ENCODE measurements at regions of chr3 and their contacts with region 1.

Region 1: GRCh38 chr3:146189519-146190173 is 28.7 kb upstream of the PLOD2 start:
- DNase-seq: peak; percentile 90
- ATAC-seq: peak; percentile 79
- H3K4me3 ChIP-seq: peak overlapping the region; percentile 36; the same call in 1 of the 2 replicates
- H3K27ac ChIP-seq: no peak overlapping the region
- H3K4me1 ChIP-seq: peaks cover 20% of the 10 kb centered on the region
- H3K27me3 ChIP-seq: no peaks in the 10 kb centered on the region
- CTCF ChIP-seq: peak; percentile 90

Region 2: DNA sequence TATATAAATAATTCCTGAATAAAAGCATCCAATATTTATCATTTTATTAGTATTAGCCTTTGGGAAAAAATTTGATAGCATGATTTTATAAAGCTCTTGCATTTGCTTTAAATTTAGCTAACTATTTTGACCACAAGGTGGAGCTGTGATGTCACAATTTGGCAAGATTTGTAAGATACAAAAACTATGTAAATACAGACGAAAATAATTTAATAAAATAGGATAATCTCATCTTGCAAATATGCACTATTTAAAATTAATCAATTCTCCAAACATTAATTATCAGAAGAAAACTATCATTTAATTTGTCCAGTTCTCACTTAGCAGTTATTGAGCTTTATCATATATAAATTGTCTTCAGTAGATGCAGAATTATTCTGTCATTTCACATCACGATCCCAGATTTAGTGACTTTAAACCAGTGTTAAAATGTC is 124.1 kb before region 1 on chr3:
- CTCF ChIA-PET with region 1: interaction called, 19 read pairs
- POLR2A ChIA-PET with region 1: no interaction called
- intact Hi-C with region 1: loop called (anchors 1 kb)
- DNase-seq: peak; percentile 82
- ATAC-seq: no peak
- H3K4me3 ChIP-seq: no peak overlapping the region
- H3K27ac ChIP-seq: peak overlapping the region; percentile 63; the same call in 1 of the 2 replicates
- H3K4me1 ChIP-seq: peaks cover 32% of the 10 kb centered on the region
- H3K27me3 ChIP-seq: no peaks in the 10 kb centered on the region
- CTCF ChIP-seq: peak; percentile 73

Region 3: DNA sequence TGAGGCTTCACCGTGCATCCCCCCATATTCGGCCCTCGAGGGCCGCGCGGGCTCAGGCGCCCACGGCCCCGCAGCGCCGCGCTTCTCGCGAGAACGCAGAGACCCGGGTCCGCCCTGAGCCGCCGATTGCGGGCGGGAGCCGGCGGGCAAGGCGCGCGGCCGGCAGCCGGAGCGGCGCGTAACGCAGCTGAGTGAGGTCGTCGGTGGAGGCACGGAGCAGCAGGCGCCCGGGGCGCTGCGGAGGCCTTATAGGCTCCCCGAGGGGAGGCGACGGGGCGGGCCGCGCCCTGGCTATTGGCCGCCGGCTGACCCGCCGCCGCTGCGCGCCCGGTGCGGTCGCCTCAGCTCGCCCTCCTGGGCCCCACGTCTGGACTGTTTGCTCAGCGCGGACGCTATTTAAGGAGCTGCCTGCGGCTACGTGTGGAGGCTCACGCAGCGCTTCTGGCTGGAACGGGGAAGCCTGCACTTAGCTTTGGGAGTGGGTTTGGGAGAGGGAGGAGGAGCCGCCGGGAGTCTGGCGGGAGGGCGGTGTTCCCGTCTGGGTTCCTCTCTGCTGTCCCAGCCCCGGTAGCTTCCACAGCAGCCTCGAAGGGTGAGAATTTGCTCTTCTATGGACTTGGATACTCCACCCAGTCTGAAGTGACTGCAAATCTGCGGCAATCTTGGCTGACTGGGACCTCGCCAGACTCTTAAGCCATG is 28.5 kb before region 1 on chr3 and contains the start of gene PLOD2:
- CTCF ChIA-PET with region 1: interaction called, 6 read pairs
- POLR2A ChIA-PET with region 1: interaction called, 4 read pairs
- intact Hi-C with region 1: loop called (anchors 1 kb)
- DNase-seq: peak; percentile 97
- ATAC-seq: peak; percentile 57
- H3K4me3 ChIP-seq: peak within 1 kb of the TSS; percentile 79
- H3K27ac ChIP-seq: peak within 1 kb of the TSS; percentile 89
- H3K4me1 ChIP-seq: peaks cover 70% of the 10 kb centered on the region
- H3K27me3 ChIP-seq: no peaks in the 10 kb centered on the region
- CTCF ChIP-seq: no peak
- total RNA-seq, gene PLOD2: 76.1 and 84.8 TPM in 2 replicates

Region 4: DNA sequence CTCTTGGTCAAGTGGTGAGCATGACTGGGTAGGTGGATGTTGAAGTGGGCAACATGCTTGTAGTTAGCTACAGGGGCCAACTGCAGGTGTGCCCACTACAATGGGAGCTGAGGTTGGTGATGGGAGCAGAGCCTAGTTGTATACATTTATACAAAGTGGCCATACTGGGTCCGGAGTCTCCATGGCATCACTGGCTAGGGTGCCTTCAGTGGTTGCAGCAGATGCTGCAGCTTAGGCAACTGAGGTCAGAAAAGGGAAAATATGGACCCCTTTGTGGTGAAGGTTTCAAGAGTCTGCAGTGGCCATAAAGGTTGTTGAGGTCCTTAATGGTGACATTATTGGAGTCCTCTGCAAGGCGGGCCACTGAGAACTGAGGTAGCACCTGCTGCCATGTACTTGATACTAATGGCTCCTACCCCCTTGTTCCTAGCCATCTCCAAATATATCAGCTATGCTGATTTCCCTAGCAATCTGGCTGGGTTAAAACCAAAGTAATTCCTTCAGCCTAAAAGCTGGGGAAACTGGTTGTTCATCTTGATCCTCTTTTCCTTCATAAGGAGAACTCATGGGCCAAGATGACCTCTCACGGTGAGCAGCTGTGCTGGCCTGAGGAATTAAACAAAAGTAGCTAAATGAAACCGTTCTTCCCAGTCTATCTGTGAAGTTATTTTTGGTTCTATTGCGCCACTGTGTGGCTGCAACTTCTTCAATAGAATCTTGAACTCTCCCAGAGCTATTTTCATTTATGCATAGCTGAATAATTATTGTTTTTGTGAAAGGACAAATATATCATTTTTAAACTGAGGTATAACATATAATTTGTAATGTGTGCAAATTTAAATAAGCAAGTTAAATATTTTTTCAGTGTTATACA is 137.3 kb after region 1 on chr3:
- CTCF ChIA-PET with region 1: interaction called, 119 read pairs
- POLR2A ChIA-PET with region 1: no interaction called
- intact Hi-C with region 1: loop called (anchors 1 kb)
- DNase-seq: peak; percentile 84
- ATAC-seq: peak; percentile 96
- H3K4me3 ChIP-seq: no peak overlapping the region
- H3K27ac ChIP-seq: no peak overlapping the region
- H3K4me1 ChIP-seq: no peaks in the 10 kb centered on the region
- H3K27me3 ChIP-seq: no peaks in the 10 kb centered on the region
- CTCF ChIP-seq: peak; percentile 91

Region 5: DNA sequence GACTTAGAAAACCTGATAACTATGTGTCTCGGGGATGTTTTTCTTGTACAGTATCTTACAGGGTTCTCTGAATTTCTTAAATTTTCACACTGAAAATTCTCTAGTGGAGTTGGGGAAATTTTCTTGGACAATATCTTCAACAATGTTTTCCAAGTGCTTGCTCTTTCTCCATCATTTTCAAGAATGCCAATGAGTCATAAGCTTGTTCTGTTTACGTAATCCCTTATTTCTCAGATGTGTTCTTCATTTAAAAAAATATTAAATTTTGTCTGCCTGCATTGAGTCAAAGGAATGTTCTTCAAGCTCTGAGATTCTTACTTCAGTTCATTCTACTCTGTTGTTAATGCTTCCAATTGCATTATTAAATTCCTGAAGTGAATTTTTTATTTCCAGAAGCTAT is 301.7 kb after region 1 on chr3:
- CTCF ChIA-PET with region 1: no interaction called
- POLR2A ChIA-PET with region 1: no interaction called
- intact Hi-C with region 1: no loop called
- DNase-seq: peak; percentile 51
- ATAC-seq: peak; percentile 46; the same call in 1 of the 2 replicates
- H3K4me3 ChIP-seq: no peak overlapping the region
- H3K27ac ChIP-seq: no peak overlapping the region
- H3K4me1 ChIP-seq: peaks cover 16% of the 10 kb centered on the region; the same call in 1 of the 2 replicates
- H3K27me3 ChIP-seq: no peaks in the 10 kb centered on the region
- CTCF ChIP-seq: no peak